ENCODE measurements at regions of chr12 and their contacts with region 1.

Region 1: DNA sequence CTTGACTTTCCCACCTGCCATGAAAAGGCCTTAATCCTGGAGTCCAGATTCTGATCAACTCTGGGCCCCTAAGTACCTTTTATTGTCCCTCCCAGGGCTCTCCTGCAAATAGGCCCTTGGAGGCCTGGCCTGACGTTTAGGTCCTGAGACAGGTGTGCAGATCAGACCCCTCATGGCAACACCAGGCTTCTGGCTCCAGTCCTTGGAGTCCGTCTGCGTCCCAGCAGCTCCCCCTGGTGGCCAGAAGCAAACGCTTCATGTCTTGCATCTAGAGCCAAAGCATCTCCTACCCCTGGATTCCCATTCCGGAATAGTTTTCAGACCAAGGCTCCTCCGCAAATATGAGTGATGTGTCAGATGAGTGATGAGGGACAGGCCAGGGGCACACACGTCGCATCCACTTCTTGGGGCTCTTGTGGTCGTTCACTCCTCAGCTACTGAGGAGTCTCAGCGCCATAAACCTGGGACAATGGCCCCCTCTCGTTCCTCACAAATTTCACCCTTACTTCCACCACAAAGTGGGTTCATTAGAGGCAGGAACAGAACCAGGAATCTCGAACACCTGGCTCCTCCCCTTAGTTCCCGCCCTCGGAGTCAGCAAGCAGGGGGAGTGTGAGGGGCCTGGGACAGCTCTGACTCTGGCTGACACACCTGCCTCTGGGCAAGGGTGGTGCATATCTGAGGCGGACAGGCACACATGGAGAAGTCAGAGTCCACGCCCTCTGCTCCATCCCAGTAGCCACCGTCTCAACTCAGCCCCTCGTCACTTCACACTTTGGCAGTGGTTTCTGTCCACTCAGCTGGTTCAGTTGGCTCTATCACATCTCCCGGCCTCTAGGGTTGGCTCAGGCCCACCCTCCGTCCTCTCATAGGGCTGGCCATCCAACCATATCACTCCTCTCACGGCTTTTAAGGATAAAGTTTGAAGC is 77.9 kb upstream of the PWP1 start:
- DNase-seq: peak; percentile 67 to 75 (median 70)
- H3K4me3 ChIP-seq: no peak overlapping the region
- H3K4me3 Mint-ChIP-seq: no peak overlapping the region
- H3K27ac ChIP-seq: no peak overlapping the region
- H3K27ac Mint-ChIP-seq: peak overlapping the region in 1 of 7 donors; percentile 35
- H3K4me1 ChIP-seq: no peaks in the 10 kb centered on the region
- H3K4me1 Mint-ChIP-seq: peaks cover 0 to 3% (median 0%) of the 10 kb centered on the region in 4 donors
- H3K27me3 ChIP-seq: no peaks in the 10 kb centered on the region
- H3K27me3 Mint-ChIP-seq: no peaks in the 10 kb centered on the region

Region 2: DNA sequence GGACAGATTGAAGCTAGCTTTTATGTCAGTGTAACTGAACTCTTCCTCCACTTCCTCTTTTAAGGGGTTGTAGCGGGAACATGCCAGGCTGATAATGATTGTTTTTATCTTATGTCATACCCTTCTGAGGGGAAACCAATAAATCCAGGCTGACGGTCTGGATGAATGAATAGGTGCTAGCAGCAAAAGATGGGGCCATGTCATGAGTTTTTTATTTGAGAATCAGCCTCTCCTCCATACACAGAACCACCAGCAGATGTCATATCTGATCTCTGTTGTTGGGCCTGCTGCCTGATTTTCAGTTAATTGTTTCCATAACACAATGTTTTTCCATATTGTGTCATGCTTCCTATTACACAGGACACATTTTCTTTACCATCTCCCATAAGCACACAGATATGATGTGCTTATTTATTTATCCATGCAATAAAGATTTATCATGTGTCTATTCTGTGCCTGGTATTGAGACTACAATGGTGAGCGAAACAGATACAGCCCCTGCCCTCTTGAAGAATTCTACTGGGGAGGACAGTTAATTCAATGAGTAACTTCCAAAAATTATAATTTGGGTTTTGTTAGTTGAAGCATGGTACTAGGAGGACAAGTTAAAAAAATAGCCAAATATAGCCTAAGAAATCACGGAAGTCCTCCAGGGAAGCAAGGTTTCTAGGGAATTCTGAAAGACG is 480.8 kb before region 1 on chr12:
- CTCF ChIA-PET with region 1: interaction called, 313 read pairs
- POLR2A ChIA-PET with region 1: interaction called, 3 read pairs
- intact Hi-C with region 1: loop called (anchors 1 kb)
- DNase-seq: peak in 3 of 5 donors; percentile 5 to 8 (median 6)
- H3K4me3 ChIP-seq: no peak overlapping the region
- H3K4me3 Mint-ChIP-seq: no peak overlapping the region
- H3K27ac ChIP-seq: no peak overlapping the region
- H3K27ac Mint-ChIP-seq: no peak overlapping the region
- H3K4me1 ChIP-seq: no peaks in the 10 kb centered on the region
- H3K4me1 Mint-ChIP-seq: peaks cover 0 to 1% (median 0%) of the 10 kb centered on the region in 4 donors
- H3K27me3 ChIP-seq: peaks cover 7% of the 10 kb centered on the region
- H3K27me3 Mint-ChIP-seq: peaks cover 6 to 10% of the 10 kb centered on the region in 2 donors

Region 3: DNA sequence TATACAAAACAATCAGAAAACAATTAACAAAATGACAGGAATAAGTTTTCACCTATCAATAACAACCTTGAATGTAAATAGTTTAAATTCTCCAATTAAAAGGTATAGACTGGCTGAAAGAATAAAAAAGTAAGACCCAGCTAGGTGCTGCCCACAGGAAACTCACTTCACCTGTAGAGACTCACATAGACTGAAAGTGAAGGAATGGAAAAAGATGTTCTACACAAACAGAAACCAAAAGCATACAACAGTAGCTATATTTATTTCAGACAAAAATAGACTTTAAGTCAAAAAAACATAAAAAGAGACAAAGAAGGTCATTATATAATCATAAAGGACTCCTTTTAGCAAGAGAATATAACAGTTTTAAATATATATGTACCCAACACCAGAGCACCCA is 74.5 kb before region 1 on chr12:
- CTCF ChIA-PET with region 1: no interaction called
- POLR2A ChIA-PET with region 1: no interaction called
- intact Hi-C with region 1: no loop called
- DNase-seq: no peak
- H3K4me3 ChIP-seq: no peak overlapping the region
- H3K4me3 Mint-ChIP-seq: no peak overlapping the region
- H3K27ac ChIP-seq: no peak overlapping the region
- H3K27ac Mint-ChIP-seq: no peak overlapping the region
- H3K4me1 ChIP-seq: no peaks in the 10 kb centered on the region
- H3K4me1 Mint-ChIP-seq: peaks cover 0 to 7% (median 2%) of the 10 kb centered on the region in 4 donors
- H3K27me3 ChIP-seq: no peaks in the 10 kb centered on the region
- H3K27me3 Mint-ChIP-seq: no peaks in the 10 kb centered on the region

Region 4: GRCh38 chr12:107622005-107622404 is 14.3 kb after region 1 on chr12:
- CTCF ChIA-PET with region 1: interaction called, 35 read pairs
- POLR2A ChIA-PET with region 1: no interaction called
- intact Hi-C with region 1: no loop called
- DNase-seq: no peak
- H3K4me3 ChIP-seq: no peak overlapping the region
- H3K4me3 Mint-ChIP-seq: no peak overlapping the region
- H3K27ac ChIP-seq: no peak overlapping the region
- H3K27ac Mint-ChIP-seq: no peak overlapping the region
- H3K4me1 ChIP-seq: no peaks in the 10 kb centered on the region
- H3K4me1 Mint-ChIP-seq: no peaks in the 10 kb centered on the region
- H3K27me3 ChIP-seq: no peaks in the 10 kb centered on the region
- H3K27me3 Mint-ChIP-seq: no peaks in the 10 kb centered on the region

Region 5: DNA sequence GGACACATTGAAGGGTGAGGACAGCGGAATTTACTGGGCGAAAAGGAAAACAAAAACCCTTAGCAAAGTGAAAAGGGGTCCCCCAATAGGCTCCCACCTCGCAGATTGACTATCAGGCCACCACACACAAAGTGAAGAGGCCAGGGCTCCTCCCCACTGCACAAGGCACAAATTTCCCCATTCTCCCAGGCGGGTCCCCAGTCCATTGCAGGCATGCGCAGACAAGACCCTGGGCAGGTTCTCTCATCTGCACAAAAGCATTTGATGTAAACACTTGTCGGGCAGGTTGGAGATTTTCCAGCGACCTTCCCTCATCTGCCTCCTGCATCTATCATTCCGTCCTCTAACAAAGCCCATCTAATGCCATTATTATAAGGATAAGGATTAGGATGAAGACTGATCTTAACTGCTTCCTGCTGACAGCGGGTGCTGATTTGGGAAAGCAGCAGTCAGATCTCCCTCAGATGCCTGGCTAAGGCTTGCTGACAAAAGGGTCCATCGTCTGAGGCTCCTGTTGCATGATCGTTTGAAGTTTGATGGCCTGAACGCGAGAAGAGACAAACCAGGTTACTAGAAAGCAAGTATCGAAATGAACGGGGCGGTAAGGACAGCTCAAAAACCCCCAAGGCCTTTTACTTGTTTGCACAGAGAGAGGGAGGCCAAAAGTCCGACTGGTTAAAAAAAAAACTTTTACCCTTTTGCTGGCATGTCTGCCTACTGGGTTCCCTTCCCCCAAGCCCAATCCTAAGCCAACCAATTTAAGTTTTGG is 181.1 kb after region 1 on chr12:
- CTCF ChIA-PET with region 1: no interaction called
- POLR2A ChIA-PET with region 1: no interaction called
- intact Hi-C with region 1: no loop called
- DNase-seq: no peak
- H3K4me3 ChIP-seq: no peak overlapping the region
- H3K4me3 Mint-ChIP-seq: no peak overlapping the region
- H3K27ac ChIP-seq: no peak overlapping the region
- H3K27ac Mint-ChIP-seq: no peak overlapping the region
- H3K4me1 ChIP-seq: no peaks in the 10 kb centered on the region
- H3K4me1 Mint-ChIP-seq: no peaks in the 10 kb centered on the region
- H3K27me3 ChIP-seq: no peaks in the 10 kb centered on the region
- H3K27me3 Mint-ChIP-seq: peaks cover 7 to 17% of the 10 kb centered on the region in 2 donors

Measured in CD4-positive, alpha-beta memory T cell (primary cell).